ENCODE measurements at regions of chr20 and their contacts with region 1.

Region 1: DNA sequence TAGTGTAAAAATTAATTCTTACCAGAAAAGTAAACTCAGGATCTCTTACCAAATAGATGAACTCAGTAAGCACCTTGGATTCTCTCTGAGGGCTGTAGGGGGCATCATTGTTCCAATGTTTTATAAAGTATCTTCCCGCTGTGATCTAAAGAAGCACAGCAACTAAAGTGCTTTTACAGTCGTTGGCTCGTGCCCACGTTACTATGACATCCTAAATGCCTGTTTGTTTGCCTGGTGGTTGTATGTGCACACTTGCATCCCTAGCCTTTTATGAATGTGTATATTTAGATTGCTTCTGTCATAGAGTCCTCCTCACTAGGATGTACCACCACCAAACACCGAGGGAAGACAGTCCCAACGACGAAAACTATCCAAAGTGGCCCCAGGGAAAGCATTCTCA is 34.5 kb downstream of the SLX4IP start:
- DNase-seq: peak; percentile 46
- ATAC-seq: peak; percentile 80
- H3K4me3 ChIP-seq: no peak overlapping the region
- H3K27ac ChIP-seq: peak overlapping the region; percentile 7
- H3K4me1 ChIP-seq: peaks cover 41 to 43% of the 10 kb centered on the region in 2 experiments
- H3K27me3 ChIP-seq: no peaks in the 10 kb centered on the region
- CTCF ChIP-seq: peak; percentile 38 to 68 (median 66); a peak in 5 of 6 replicates
- POLR2A ChIP-seq: no peak
- RAD21 ChIP-seq: peak; percentile 70

Region 2: GRCh38 chr20:10357974-10358373 is 111.6 kb before region 1 on chr20:
- CTCF ChIA-PET with region 1: no interaction called
- POLR2A ChIA-PET with region 1: no interaction called
- RAD21 ChIA-PET with region 1: no interaction called
- intact Hi-C with region 1: no loop called
- DNase-seq: no peak
- ATAC-seq: peak; percentile 57
- H3K4me3 ChIP-seq: no peak overlapping the region
- H3K27ac ChIP-seq: no peak overlapping the region
- H3K4me1 ChIP-seq: peaks cover 0 to 5% of the 10 kb centered on the region in 2 experiments; a peak in 1 of 4 replicates
- H3K27me3 ChIP-seq: no peaks in the 10 kb centered on the region
- CTCF ChIP-seq: peak; percentile 26 to 58 (median 49); a peak in 5 of 6 replicates
- POLR2A ChIP-seq: no peak
- RAD21 ChIP-seq: peak; percentile 46

Region 3: GRCh38 chr20:10487142-10488136 is 17.8 kb after region 1 on chr20:
- CTCF ChIA-PET with region 1: no interaction called
- POLR2A ChIA-PET with region 1: no interaction called
- RAD21 ChIA-PET with region 1: no interaction called
- intact Hi-C with region 1: no loop called
- DNase-seq: no peak
- ATAC-seq: no peak
- H3K4me3 ChIP-seq: no peak overlapping the region
- H3K27ac ChIP-seq: no peak overlapping the region
- H3K4me1 ChIP-seq: peaks cover 0 to 23% of the 10 kb centered on the region in 2 experiments; a peak in 2 of 4 replicates
- H3K27me3 ChIP-seq: no peaks in the 10 kb centered on the region
- CTCF ChIP-seq: no peak
- POLR2A ChIP-seq: no peak
- RAD21 ChIP-seq: no peak

Region 4: DNA sequence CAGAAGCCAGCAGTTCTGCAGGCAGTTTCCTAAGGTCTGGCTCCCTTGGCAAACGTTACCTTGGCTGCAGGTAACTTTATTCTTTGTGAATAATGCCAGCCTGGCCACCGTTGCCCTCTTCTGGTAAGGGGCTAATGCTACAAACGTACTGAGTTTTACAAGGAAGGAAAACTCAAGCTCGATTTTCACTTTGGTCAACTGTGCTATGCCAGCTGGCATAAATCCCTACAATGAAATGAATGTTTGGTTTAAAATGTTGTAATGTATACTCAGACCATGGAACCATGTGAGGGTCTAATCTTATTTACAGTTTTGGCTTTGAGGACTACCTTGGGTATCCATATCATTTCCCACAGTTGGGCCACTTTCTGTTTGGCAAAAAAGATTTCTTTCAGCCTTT is 66.9 kb after region 1 on chr20:
- CTCF ChIA-PET with region 1: interaction called, 6 read pairs
- POLR2A ChIA-PET with region 1: no interaction called
- RAD21 ChIA-PET with region 1: no interaction called
- intact Hi-C with region 1: loop called (anchors 2 kb)
- DNase-seq: no peak
- ATAC-seq: peak; percentile 28; the same call in 1 of the 2 replicates
- H3K4me3 ChIP-seq: no peak overlapping the region
- H3K27ac ChIP-seq: no peak overlapping the region
- H3K4me1 ChIP-seq: peaks cover 54 to 60% of the 10 kb centered on the region in 2 experiments
- H3K27me3 ChIP-seq: no peaks in the 10 kb centered on the region
- CTCF ChIP-seq: peak; percentile 45 to 51 (median 49); a peak in 5 of 6 replicates
- POLR2A ChIP-seq: no peak
- RAD21 ChIP-seq: peak; percentile 78

Measured in HCT116 (cell line).